Psoas muscle (tissue), 8 donors: ENCODE measurements at regions of chr5 and their contacts with region 1.

Region 1: DNA sequence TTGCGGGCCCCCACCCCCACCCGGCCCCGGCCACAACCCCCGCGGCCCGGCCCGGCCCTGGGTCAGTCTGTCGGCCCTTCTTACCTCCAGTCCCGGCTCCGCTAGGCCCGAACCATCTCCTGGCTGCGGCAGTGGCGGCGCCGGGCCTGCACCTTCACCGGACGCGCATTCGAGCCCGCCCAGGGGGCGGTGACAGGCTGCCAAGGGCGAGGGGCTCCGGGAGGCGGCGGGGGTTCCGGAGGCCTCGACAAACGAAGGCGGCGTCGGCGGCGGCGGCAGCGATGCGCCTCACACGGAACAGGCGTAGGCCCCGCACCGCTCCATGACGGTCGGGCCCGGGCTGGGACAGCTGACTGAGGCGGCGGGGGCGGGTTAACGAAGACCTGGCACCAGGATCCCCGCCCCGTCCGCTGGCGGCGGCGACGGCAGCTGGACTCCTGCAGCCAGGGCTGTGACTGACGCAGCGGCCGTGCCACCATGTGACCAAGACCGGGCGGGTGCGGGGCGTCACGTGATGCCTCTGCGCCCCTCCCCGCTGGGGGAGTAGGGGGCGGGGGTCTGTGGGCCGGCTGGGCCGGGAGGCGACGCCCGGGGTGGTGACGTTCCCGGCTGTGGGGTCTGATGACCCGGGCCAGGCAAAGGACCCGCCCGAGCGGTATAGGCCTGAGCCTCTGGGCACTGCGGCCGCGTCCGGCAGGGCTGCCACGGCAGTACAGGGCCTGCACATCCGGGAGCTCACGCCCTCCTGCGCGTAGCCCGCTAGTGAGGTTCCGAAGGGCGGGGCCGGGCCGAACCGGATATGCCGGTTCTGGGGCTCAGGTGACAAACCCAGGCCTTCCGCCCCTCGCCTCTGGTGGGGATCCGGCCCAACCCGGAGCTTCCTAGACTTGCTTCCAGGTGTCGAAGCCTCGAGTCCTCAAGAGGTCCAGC is at the start of gene AFF4:
- DNase-seq: peak; percentile 98 to 99
- ATAC-seq: peak; percentile 95 to 97 (median 96)
- H3K4me3 ChIP-seq: peak within 1 kb of the TSS; percentile 82
- H3K27ac ChIP-seq: peak within 1 kb of the TSS; percentile 96
- H3K4me1 ChIP-seq: peaks cover 31% of the 10 kb centered on the region
- H3K27me3 ChIP-seq: no peaks in the 10 kb centered on the region
- CTCF ChIP-seq: no peak
- total RNA-seq, gene AFF4: 49.6 to 68.2 (median 58.9) TPM

Region 2: DNA sequence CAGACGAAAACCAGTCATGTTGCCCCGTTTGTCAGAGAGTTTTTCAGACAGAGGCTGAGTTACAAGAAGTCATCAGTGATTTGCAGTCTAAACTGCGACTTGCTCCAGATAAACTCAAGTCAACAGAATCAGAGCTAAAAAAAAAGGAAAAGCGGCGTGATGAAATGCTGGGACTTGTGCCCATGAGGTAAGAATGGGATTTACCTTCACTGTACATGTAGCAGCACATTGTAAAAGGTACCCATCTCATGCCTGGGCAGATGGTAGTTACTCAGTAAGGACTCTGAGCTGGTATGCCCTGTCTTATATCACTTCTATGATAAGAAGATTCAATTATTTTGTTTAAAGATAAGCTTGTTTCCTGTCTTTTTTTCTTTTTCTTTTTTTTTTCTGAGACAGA is 367.8 kb before region 1 on chr5:
- intact Hi-C with region 1: no loop called
- DNase-seq: no peak
- ATAC-seq: no peak
- H3K4me3 ChIP-seq: no peak overlapping the region
- H3K27ac ChIP-seq: no peak overlapping the region
- H3K4me1 ChIP-seq: no peaks in the 10 kb centered on the region
- H3K27me3 ChIP-seq: no peaks in the 10 kb centered on the region
- CTCF ChIP-seq: no peak

Region 3: GRCh38 chr5:133025804-133026663 is 62.6 kb after region 1 on chr5 and contains the start of gene ZCCHC10:
- intact Hi-C with region 1: loop called (anchors 2 to 10 kb)
- DNase-seq: peak; percentile 93 to 95
- ATAC-seq: peak; percentile 99
- H3K4me3 ChIP-seq: peak within 1 kb of the TSS; percentile 80
- H3K27ac ChIP-seq: peak within 1 kb of the TSS; percentile 94
- H3K4me1 ChIP-seq: peaks cover 16% of the 10 kb centered on the region
- H3K27me3 ChIP-seq: no peaks in the 10 kb centered on the region
- CTCF ChIP-seq: no peak
- total RNA-seq, gene ZCCHC10: 19.6 to 26.7 (median 20.8) TPM

Region 4: GRCh38 chr5:133051580-133052332 is 88.3 kb after region 1 on chr5 and contains the start of gene HSPA4:
- intact Hi-C with region 1: loop called in 1 of 2 experiments (anchors 5 kb)
- DNase-seq: peak; percentile 97 to 98
- ATAC-seq: peak; percentile 91 to 92 (median 92)
- H3K4me3 ChIP-seq: peak within 1 kb of the TSS; percentile 98
- H3K27ac ChIP-seq: peak within 1 kb of the TSS; percentile 100
- H3K4me1 ChIP-seq: peaks cover 39% of the 10 kb centered on the region
- H3K27me3 ChIP-seq: no peaks in the 10 kb centered on the region
- CTCF ChIP-seq: no peak
- total RNA-seq, gene HSPA4: 108 to 154 (median 130) TPM